Activated T-helper 1 cell treated with anti-CD3 and anti-CD28 coated beads, Interleukin-12 subunit alpha, Interleukin-12 subunit beta, Interleukin-2, Interleukin-4 antibody, amounts not matched to agents 30 ng/mL and 10 ng/mL and 1 ng/mL, durations not matched to agents 14 hours and 24 hours and 36 hours (primary cell): ENCODE measurements at regions of chr1 and their contacts with region 1.

Region 1: GRCh38 chr1:51519048-51519864 is at the start of gene EPS15:
- DNase-seq: peak; percentile 82
- H3K4me3 Mint-ChIP-seq: peak within 1 kb of the TSS; percentile 98
- H3K27ac Mint-ChIP-seq: peak within 1 kb of the TSS; percentile 98
- H3K4me1 Mint-ChIP-seq: peaks cover 61% of the 10 kb centered on the region
- H3K27me3 Mint-ChIP-seq: no peaks in the 10 kb centered on the region
- total RNA-seq, gene EPS15: 53.0 and 55.5 TPM in 2 replicates

Region 2: DNA sequence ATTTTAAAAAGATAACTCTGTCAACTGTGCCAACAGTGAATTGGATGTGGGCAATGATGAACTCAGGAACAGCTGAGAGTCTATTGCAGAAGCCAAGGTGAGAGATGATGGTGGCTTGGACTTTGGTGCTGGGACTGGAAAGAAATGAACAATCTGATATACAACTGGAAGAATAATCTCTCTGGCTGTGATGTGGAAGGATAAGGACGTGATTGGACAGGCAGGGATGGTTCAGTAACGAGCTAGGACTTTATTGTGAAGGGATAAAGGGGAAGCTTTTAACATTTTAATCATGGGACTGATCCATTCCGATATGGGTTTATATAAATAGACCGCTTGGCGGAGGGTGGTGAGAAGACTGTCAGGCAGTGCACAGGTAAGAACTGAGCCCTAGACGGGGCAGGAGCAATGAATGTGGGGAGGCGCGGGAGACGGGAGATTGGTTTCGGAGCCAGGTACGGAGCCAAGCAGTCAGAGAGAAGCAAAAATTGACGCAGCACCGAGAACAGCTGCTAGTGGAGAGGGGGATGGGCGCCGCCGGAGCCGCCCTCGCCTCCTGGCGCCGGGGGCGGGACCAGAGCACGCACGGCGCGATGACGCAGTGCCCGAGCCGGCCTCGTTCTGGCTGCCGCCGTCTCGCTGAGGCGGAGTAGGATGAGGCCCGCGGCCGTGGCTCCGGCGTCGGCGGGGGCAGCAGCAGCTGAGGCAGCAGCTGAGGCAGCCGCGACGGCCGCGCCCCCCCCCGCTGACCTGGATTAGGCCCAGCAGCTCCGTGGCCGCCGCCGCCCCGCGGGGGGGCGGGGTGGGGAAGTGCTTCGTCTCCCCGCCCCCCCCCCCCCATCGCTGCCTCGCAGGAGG is 283.4 kb before region 1 on chr1 and contains the start of gene RNF11:
- intact Hi-C with region 1: loop called (anchors 5 kb)
- DNase-seq: peak; percentile 90
- H3K4me3 Mint-ChIP-seq: peak within 1 kb of the TSS; percentile 96
- H3K27ac Mint-ChIP-seq: peak within 1 kb of the TSS; percentile 88
- H3K4me1 Mint-ChIP-seq: peaks cover 13% of the 10 kb centered on the region
- H3K27me3 Mint-ChIP-seq: peaks cover 2% of the 10 kb centered on the region
- total RNA-seq, gene RNF11: 28.4 and 29.6 TPM in 2 replicates

Region 3: GRCh38 chr1:51541313-51542174 is 22.3 kb after region 1 on chr1:
- intact Hi-C with region 1: loop called (anchors 1 kb)
- DNase-seq: no peak
- H3K4me3 Mint-ChIP-seq: no peak overlapping the region
- H3K27ac Mint-ChIP-seq: peak overlapping the region; percentile 65
- H3K4me1 Mint-ChIP-seq: peaks cover 29% of the 10 kb centered on the region
- H3K27me3 Mint-ChIP-seq: peaks cover 2% of the 10 kb centered on the region

Region 4: GRCh38 chr1:51616901-51617708 is 97.8 kb after region 1 on chr1 and contains the start of gene OSBPL9:
- intact Hi-C with region 1: loop called (anchors 1 kb)
- DNase-seq: peak; percentile 79
- H3K4me3 Mint-ChIP-seq: peak within 1 kb of the TSS; percentile 100
- H3K27ac Mint-ChIP-seq: peak within 1 kb of the TSS; percentile 98
- H3K4me1 Mint-ChIP-seq: peaks cover 22% of the 10 kb centered on the region
- H3K27me3 Mint-ChIP-seq: peaks cover 5% of the 10 kb centered on the region
- total RNA-seq, gene OSBPL9: 48.1 and 48.8 TPM in 2 replicates

Region 5: GRCh38 chr1:51878616-51879336 is 359.5 kb after region 1 on chr1 and contains the start of gene NRDC:
- intact Hi-C with region 1: loop called (anchors 2 kb)
- DNase-seq: peak; percentile 99
- H3K4me3 Mint-ChIP-seq: no peak within 1 kb of the TSS
- H3K27ac Mint-ChIP-seq: no peak within 1 kb of the TSS
- H3K4me1 Mint-ChIP-seq: no peaks in the 10 kb centered on the region
- H3K27me3 Mint-ChIP-seq: peaks cover 14% of the 10 kb centered on the region
- total RNA-seq, gene NRDC: 177 and 185 TPM in 2 replicates